Testis (tissue), 5 donors: ENCODE measurements at regions of chr9 and their contacts with region 1.

Region 1: GRCh38 chr9:19230356-19231125 is at the start of gene DENND4C:
- DNase-seq: peak; percentile 90
- H3K4me3 ChIP-seq: peak within 1 kb of the TSS; percentile 97 to 99
- H3K27ac ChIP-seq: peak within 1 kb of the TSS; percentile 99
- H3K4me1 ChIP-seq: peaks cover 13% of the 10 kb centered on the region
- H3K27me3 ChIP-seq: no peaks in the 10 kb centered on the region
- CTCF ChIP-seq: no peak
- POLR2A ChIP-seq: no peak
- total RNA-seq, gene DENND4C: 126 to 136 TPM

Region 2: DNA sequence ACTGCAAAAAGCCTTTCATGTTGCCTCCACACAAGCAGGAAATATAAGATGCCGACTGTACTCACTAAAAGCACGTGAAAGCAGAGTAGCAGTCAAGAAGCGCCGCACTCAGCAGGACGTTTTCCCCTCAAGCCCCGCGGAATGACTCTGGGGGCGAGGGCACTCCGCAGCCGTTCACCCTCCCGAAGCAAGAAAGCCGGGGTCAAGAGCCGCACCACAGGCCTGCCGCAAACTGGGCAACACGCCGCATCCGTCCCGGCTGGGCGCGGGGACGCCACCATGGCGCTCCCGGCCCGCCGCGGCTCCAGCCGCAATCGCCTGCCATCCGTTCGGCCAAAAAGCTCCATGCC is 149.1 kb after region 1 on chr9:
- intact Hi-C with region 1: loop called (anchors 5 kb)
- DNase-seq: peak; percentile 49
- H3K4me3 ChIP-seq: peak overlapping the region; percentile 70 to 83
- H3K27ac ChIP-seq: peak overlapping the region; percentile 87 to 93
- H3K4me1 ChIP-seq: peaks cover 15% of the 10 kb centered on the region
- H3K27me3 ChIP-seq: no peaks in the 10 kb centered on the region
- CTCF ChIP-seq: no peak
- POLR2A ChIP-seq: no peak